ENCODE measurements at regions of chr17 and their contacts with region 1.

Region 1: GRCh38 chr17:5486204-5487124 is at the start of gene MIS12:
- DNase-seq: peak; percentile 96 to 100 (median 98)
- H3K4me3 ChIP-seq: peak within 1 kb of the TSS; percentile 86 to 93
- H3K4me3 Mint-ChIP-seq: peak within 1 kb of the TSS; percentile 83 to 98 (median 94)
- H3K27ac ChIP-seq: peak within 1 kb of the TSS; percentile 95
- H3K27ac Mint-ChIP-seq: peak within 1 kb of the TSS; percentile 86 to 99 (median 99)
- H3K4me1 ChIP-seq: peaks cover 40% of the 10 kb centered on the region
- H3K4me1 Mint-ChIP-seq: peaks cover 28 to 66% (median 49%) of the 10 kb centered on the region in 4 donors
- H3K27me3 ChIP-seq: no peaks in the 10 kb centered on the region
- H3K27me3 Mint-ChIP-seq: no peaks in the 10 kb centered on the region
- total RNA-seq, gene MIS12: 42.2 to 45.0 TPM

Region 2: DNA sequence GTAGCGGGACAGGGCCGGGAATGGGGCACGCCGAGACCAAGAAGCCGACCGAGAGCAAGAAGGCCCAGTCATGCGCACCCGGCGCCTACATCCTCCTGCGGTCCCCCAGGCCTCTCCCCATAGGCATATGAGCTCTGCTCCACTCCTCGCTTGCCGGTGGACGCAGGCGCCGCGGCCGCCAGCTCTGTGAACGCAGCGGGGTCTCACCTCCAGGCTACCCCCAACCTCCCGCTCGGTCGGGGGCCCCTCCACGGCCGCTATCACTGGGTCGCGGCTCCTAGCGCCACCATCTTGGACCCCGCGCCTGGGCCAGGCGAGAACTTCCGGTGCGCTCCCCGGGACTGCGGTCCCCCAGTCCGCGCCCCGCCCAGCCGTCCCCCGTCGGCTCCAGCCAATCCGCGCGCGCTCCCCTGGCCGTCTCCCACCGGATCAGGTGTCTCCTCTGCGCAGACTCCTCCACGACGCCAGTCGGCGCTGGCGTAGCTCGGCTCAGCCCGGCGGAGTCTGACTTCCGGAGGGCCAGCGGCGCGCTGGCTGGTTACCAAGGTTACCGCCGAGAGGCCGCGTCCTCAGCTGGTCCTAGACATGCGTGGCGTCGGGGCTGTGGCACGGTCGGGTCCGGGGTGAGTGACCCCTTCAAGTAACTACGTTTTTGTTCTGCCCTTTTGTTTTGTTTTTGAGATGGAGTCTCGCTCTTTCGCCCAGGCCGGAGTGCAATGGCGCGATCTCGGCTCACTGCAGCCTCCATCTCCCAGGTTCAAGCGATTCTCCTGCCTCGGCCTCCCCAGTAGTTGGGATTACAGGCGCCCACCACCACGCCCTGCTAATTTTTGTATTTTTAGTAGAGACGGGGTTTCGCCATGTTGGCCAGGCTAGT is 294.7 kb before region 1 on chr17 and contains the start of gene ZNF594:
- CTCF ChIA-PET with region 1: no interaction called
- POLR2A ChIA-PET with region 1: interaction called, 5 read pairs
- intact Hi-C with region 1: loop called (anchors 1 kb)
- DNase-seq: peak; percentile 95 to 97 (median 96)
- H3K4me3 ChIP-seq: peak within 1 kb of the TSS; percentile 69 to 92
- H3K4me3 Mint-ChIP-seq: peak within 1 kb of the TSS; percentile 92 to 97 (median 94)
- H3K27ac ChIP-seq: peak within 1 kb of the TSS; percentile 68
- H3K27ac Mint-ChIP-seq: peak within 1 kb of the TSS; percentile 90 to 97 (median 93)
- H3K4me1 ChIP-seq: peaks cover 23% of the 10 kb centered on the region
- H3K4me1 Mint-ChIP-seq: peaks cover 17 to 35% (median 25%) of the 10 kb centered on the region in 4 donors
- H3K27me3 ChIP-seq: no peaks in the 10 kb centered on the region
- H3K27me3 Mint-ChIP-seq: no peaks in the 10 kb centered on the region
- total RNA-seq, gene ZNF594: 28.9 to 30.7 TPM

Region 3: DNA sequence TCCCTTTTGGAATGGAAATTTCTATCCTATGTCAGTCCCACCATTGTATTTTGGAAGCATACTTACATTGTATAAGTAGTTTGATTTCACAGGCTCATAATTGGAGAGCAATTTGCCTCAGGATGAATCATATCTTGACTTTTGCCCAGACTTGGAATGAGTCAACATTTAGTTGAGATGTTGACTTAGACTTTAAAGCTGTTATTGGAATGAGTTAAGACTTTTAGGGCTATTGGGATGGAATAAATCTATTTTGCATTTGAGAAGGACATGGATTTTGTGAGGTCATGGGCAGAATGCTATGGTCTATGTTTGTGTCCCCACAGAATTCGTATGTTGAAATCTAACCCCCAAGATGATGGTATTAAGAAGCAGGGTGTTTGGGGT is 282.6 kb before region 1 on chr17:
- CTCF ChIA-PET with region 1: no interaction called
- POLR2A ChIA-PET with region 1: no interaction called
- intact Hi-C with region 1: no loop called
- DNase-seq: no peak
- H3K4me3 ChIP-seq: no peak overlapping the region
- H3K4me3 Mint-ChIP-seq: no peak overlapping the region
- H3K27ac ChIP-seq: no peak overlapping the region
- H3K27ac Mint-ChIP-seq: peak overlapping the region in 1 of 7 donors; percentile 46
- H3K4me1 ChIP-seq: no peaks in the 10 kb centered on the region
- H3K4me1 Mint-ChIP-seq: no peaks in the 10 kb centered on the region
- H3K27me3 ChIP-seq: no peaks in the 10 kb centered on the region
- H3K27me3 Mint-ChIP-seq: no peaks in the 10 kb centered on the region

Region 4: GRCh38 chr17:5438716-5439445 is 47.6 kb before region 1 on chr17 and contains the start of gene C1QBP:
- CTCF ChIA-PET with region 1: interaction called, 5 read pairs
- POLR2A ChIA-PET with region 1: interaction called, 9 read pairs
- intact Hi-C with region 1: loop called (anchors 1 kb)
- DNase-seq: peak; percentile 91 to 93 (median 92)
- H3K4me3 ChIP-seq: peak within 1 kb of the TSS; percentile 68 to 74
- H3K4me3 Mint-ChIP-seq: peak within 1 kb of the TSS; percentile 83 to 94 (median 88)
- H3K27ac ChIP-seq: peak within 1 kb of the TSS; percentile 80
- H3K27ac Mint-ChIP-seq: peak within 1 kb of the TSS; percentile 91 to 98 (median 95)
- H3K4me1 ChIP-seq: peaks cover 34% of the 10 kb centered on the region
- H3K4me1 Mint-ChIP-seq: peaks cover 21 to 47% (median 30%) of the 10 kb centered on the region in 4 donors
- H3K27me3 ChIP-seq: no peaks in the 10 kb centered on the region
- H3K27me3 Mint-ChIP-seq: no peaks in the 10 kb centered on the region
- total RNA-seq, gene C1QBP: 73.1 to 78.9 TPM

Region 5: DNA sequence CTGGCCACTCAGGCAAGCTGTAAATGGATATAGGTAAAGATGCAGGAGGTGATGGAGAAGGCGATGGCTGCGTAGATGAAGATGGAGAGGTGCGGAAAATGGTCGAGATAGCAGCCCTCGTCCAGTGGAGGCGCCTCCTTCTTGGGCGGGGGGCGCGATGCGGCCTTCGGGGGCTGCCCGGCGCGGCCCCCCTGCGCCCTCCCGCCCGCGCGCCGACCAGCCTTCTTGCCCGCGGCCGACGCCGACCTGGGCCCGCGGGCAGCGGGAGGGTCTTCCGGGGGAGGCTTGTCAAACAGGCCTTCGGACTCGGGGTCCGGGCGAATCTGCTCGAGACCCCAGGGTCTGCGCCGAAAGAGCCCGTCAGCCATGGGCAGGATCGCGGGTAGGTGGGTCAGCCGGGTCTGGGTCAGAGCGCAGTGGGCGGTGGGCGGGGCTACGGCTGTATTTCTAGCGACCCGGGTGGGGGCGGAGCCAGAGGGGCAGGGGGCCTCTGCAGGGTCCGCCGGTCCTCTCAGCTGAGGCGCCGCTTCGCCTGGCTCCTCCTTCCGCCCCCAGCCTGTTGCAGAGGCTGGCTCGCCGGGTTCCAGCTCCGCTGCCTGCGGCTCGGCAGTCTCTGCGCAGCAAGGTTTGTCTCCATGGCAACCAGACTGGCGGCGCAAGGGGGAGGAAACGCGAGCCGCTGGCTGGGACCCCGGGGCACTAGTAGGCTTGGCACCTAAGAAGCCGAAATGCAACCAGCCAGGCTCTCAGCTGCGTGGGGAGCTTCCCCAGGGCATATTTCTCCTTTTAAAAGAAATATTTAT is 14.3 kb after region 1 on chr17:
- CTCF ChIA-PET with region 1: interaction called, 3 read pairs
- POLR2A ChIA-PET with region 1: interaction called, 50 read pairs
- intact Hi-C with region 1: loop called (anchors 1 kb)
- DNase-seq: peak; percentile 74 to 89 (median 80)
- H3K4me3 ChIP-seq: peak overlapping the region in 1 of 2 donors; percentile 55
- H3K4me3 Mint-ChIP-seq: peak overlapping the region; percentile 87 to 98 (median 94)
- H3K27ac ChIP-seq: peak overlapping the region; percentile 55
- H3K27ac Mint-ChIP-seq: peak overlapping the region; percentile 77 to 97 (median 95)
- H3K4me1 ChIP-seq: peaks cover 12% of the 10 kb centered on the region
- H3K4me1 Mint-ChIP-seq: peaks cover 10 to 30% (median 20%) of the 10 kb centered on the region in 4 donors
- H3K27me3 ChIP-seq: no peaks in the 10 kb centered on the region
- H3K27me3 Mint-ChIP-seq: no peaks in the 10 kb centered on the region

Region 6: DNA sequence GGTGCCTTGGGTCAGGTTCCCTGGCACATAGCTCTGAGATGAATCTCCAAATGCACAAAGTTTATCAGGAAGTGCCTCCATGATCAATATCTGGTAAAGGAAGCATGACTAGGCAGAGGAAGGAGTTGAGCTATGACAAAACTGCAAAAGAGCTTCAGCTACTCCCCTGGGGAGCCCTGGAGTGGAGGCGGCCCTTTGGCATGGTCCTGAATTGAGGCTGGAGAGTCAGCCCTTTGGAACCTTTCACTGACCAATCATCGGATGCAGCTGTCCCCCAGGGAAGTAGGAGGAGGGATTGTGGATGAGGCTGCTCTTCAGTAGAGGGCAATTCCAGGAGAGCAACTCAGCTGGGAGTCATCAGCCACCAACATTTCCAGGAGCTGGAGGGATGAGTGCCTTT is 144.0 kb after region 1 on chr17:
- CTCF ChIA-PET with region 1: no interaction called
- POLR2A ChIA-PET with region 1: no interaction called
- intact Hi-C with region 1: no loop called
- DNase-seq: no peak
- H3K4me3 ChIP-seq: no peak overlapping the region
- H3K4me3 Mint-ChIP-seq: no peak overlapping the region
- H3K27ac ChIP-seq: no peak overlapping the region
- H3K27ac Mint-ChIP-seq: no peak overlapping the region
- H3K4me1 ChIP-seq: no peaks in the 10 kb centered on the region
- H3K4me1 Mint-ChIP-seq: peaks cover 0 to 1% (median 0%) of the 10 kb centered on the region in 4 donors
- H3K27me3 ChIP-seq: no peaks in the 10 kb centered on the region
- H3K27me3 Mint-ChIP-seq: peaks cover 25 to 29% of the 10 kb centered on the region in 2 donors

Region 7: DNA sequence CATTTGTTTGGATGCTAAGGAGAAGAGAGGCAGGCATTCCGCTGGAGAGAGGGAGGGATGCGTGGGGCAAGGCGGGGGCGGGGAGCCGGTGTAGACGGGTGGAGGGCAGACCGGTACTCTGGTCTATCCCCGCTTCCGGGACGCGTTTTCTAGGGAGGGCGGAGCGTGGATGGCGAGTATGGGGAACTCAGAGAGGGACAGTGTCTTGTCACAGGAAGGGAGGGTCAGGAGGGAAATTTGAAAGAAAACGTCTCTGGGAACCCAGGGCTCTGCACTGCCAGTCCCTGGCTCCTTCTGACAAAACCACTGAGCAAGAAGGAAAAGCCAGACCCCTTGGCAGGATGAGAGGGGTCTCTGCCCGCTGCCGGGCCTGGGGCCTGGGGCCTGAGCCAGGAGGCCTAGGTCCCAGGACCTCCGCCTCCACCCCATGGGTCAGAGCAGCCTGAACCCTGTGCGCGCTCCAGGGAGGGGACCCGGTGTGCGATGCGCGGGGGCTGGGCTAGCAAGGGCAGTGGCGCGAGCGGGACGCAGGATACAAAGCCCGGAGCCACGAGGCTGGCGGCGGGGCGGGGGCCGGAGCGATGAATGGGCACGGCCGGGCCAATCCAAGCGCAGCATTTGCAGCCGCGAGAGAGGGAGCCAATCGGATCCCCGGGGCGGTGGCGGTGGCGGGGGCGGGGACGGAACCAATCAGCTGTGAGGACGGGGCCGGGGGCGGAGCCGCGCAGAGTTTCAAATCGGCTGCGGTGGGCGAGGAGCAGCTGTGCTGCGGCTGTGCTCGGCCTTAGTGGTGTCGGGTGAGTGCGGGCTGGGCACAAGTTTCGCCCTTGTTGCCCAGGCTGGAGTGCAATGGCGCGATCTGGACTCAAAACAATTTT is 957.5 kb after region 1 on chr17 and contains the start of gene PIMREG:
- CTCF ChIA-PET with region 1: no interaction called
- POLR2A ChIA-PET with region 1: no interaction called
- intact Hi-C with region 1: loop called (anchors 5 kb)
- DNase-seq: peak; percentile 82 to 91 (median 83)
- H3K4me3 ChIP-seq: peak within 1 kb of the TSS; percentile 69 to 93
- H3K4me3 Mint-ChIP-seq: peak within 1 kb of the TSS; percentile 91 to 94 (median 92)
- H3K27ac ChIP-seq: peak within 1 kb of the TSS; percentile 17
- H3K27ac Mint-ChIP-seq: peak within 1 kb of the TSS; percentile 68 to 96 (median 87)
- H3K4me1 ChIP-seq: peaks cover 5% of the 10 kb centered on the region
- H3K4me1 Mint-ChIP-seq: peaks cover 9 to 16% (median 12%) of the 10 kb centered on the region in 4 donors
- H3K27me3 ChIP-seq: no peaks in the 10 kb centered on the region
- H3K27me3 Mint-ChIP-seq: peaks cover 6 to 8% of the 10 kb centered on the region in 2 donors
- total RNA-seq, gene PIMREG: not detected

Region 8: GRCh38 chr17:6639586-6640535 is 1153.4 kb after region 1 on chr17:
- CTCF ChIA-PET with region 1: no interaction called
- POLR2A ChIA-PET with region 1: no interaction called
- intact Hi-C with region 1: no loop called
- DNase-seq: peak in 1 of 5 donors; percentile 53
- H3K4me3 ChIP-seq: peak overlapping the region; percentile 74 to 94
- H3K4me3 Mint-ChIP-seq: peak overlapping the region; percentile 95 to 98 (median 96)
- H3K27ac ChIP-seq: peak overlapping the region; percentile 81
- H3K27ac Mint-ChIP-seq: peak overlapping the region; percentile 96 to 99 (median 98)
- H3K4me1 ChIP-seq: peaks cover 40% of the 10 kb centered on the region
- H3K4me1 Mint-ChIP-seq: peaks cover 16 to 61% (median 40%) of the 10 kb centered on the region in 4 donors
- H3K27me3 ChIP-seq: no peaks in the 10 kb centered on the region
- H3K27me3 Mint-ChIP-seq: no peaks in the 10 kb centered on the region